ENCODE measurements at regions of chr12 and their contacts with region 1.

Region 1: GRCh38 chr12:106841510-106842302 is 67.2 kb downstream of the RIC8B start:
- DNase-seq: peak; percentile 33 to 68 (median 48)
- ATAC-seq: peak; percentile 82
- H3K4me3 ChIP-seq: no peak overlapping the region
- H3K27ac ChIP-seq: no peak overlapping the region
- H3K4me1 ChIP-seq: peaks cover 6 to 24% of the 10 kb centered on the region in 2 experiments; a peak in 3 of 5 replicates
- H3K27me3 ChIP-seq: no peaks in the 10 kb centered on the region
- CTCF ChIP-seq: peak; percentile 41 to 87 (median 68); a peak in 5 of 6 replicates
- EP300 ChIP-seq: no peak
- POLR2A ChIP-seq: no peak
- RAD21 ChIP-seq: peak; percentile 78 to 92

Region 2: GRCh38 chr12:106357549-106358395 is 483.9 kb before region 1 on chr12 and contains the start of gene POLR3B:
- CTCF ChIA-PET with region 1: interaction called, 13 read pairs
- POLR2A ChIA-PET with region 1: no interaction called
- in situ Hi-C with region 1: no loop called
- intact Hi-C with region 1: loop called (anchors 10 kb)
- DNase-seq: peak; percentile 95 to 98 (median 96)
- ATAC-seq: peak; percentile 86
- H3K4me3 ChIP-seq: peak within 1 kb of the TSS; percentile 72
- H3K27ac ChIP-seq: peak within 1 kb of the TSS; percentile 94
- H3K4me1 ChIP-seq: peaks cover 14 to 15% of the 10 kb centered on the region in 2 experiments; a peak in 4 of 5 replicates
- H3K27me3 ChIP-seq: no peaks in the 10 kb centered on the region
- CTCF ChIP-seq: peak; percentile 79 to 92 (median 90)
- EP300 ChIP-seq: peak; percentile 30; the same call in 1 of the 2 replicates
- POLR2A ChIP-seq: peak; percentile 94
- RAD21 ChIP-seq: peak; percentile 81 to 82
- polyA plus RNA-seq, gene POLR3B: 7.6 to 16.5 TPM

Region 3: DNA sequence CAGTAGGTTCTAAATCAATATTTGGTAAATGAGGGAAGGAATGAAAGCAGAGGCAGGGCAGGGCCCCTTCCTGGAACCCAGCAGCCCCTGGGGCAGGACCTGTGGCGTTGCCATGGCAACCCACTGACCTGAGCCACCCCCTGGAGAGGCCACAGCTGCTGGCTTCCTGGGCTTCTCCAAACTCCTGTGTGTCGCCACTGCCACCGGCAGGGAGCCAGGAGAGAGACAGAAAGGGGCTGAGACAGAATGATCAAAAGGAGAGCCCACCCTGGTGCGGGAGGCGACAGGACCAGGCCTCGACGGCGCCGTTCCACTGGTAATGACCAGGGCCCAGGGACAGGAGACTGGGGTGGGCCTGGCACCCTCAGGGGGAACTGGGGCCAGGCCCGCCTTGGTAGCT is 240.7 kb before region 1 on chr12:
- CTCF ChIA-PET with region 1: no interaction called
- POLR2A ChIA-PET with region 1: no interaction called
- in situ Hi-C with region 1: no loop called
- intact Hi-C with region 1: loop called (anchors 10 kb)
- DNase-seq: peak; percentile 36 to 44 (median 43)
- ATAC-seq: peak; percentile 86
- H3K4me3 ChIP-seq: no peak overlapping the region
- H3K27ac ChIP-seq: no peak overlapping the region
- H3K4me1 ChIP-seq: peaks cover 0 to 5% of the 10 kb centered on the region in 2 experiments; a peak in 1 of 5 replicates
- H3K27me3 ChIP-seq: peaks cover 0 to 26% of the 10 kb centered on the region in 2 experiments; a peak in 2 of 5 replicates
- CTCF ChIP-seq: 0 out of 6 replicates have a peak, but pooled peaks of 1 of the 3 experiments have one; percentile 3
- EP300 ChIP-seq: no peak
- POLR2A ChIP-seq: no peak
- RAD21 ChIP-seq: peak in 1 of 2 experiments; percentile 20; a peak in 1 of 4 replicates

Region 4: DNA sequence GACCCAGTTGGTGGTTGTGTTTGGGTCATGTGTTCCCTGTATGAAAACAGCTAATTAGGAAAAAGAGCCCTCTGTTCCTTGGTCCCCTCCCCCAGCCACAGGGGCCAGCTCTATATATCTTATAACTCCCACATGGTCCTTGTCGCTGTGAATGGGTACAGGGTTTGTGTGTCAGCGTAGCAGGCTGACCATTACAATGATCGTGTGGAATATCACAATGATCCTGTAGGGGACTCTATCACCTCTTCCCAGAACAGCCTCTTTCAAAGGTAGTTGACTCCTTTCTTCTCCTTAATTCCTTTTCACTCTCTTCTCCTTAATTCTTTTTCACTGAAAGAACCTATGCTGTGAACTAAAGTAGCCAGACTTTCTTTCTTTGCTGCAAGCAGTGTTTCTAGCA is 118.9 kb before region 1 on chr12:
- CTCF ChIA-PET with region 1: interaction called, 4 read pairs
- POLR2A ChIA-PET with region 1: no interaction called
- in situ Hi-C with region 1: no loop called
- intact Hi-C with region 1: loop called (anchors 2 kb)
- DNase-seq: peak in 3 of 4 experiments; percentile 15 to 37 (median 28)
- ATAC-seq: peak; percentile 77
- H3K4me3 ChIP-seq: no peak overlapping the region
- H3K27ac ChIP-seq: no peak overlapping the region
- H3K4me1 ChIP-seq: no peaks in the 10 kb centered on the region
- H3K27me3 ChIP-seq: peaks cover 6 to 13% of the 10 kb centered on the region in 2 experiments; a peak in 4 of 5 replicates
- CTCF ChIP-seq: peak; percentile 21 to 38 (median 27); a peak in 1 of 6 replicates
- EP300 ChIP-seq: no peak
- POLR2A ChIP-seq: no peak
- RAD21 ChIP-seq: no peak

Region 5: GRCh38 chr12:106774005-106774807 is 67.5 kb before region 1 on chr12 and contains the start of gene RIC8B:
- CTCF ChIA-PET with region 1: no interaction called
- POLR2A ChIA-PET with region 1: interaction called, 4 read pairs
- in situ Hi-C with region 1: no loop called
- intact Hi-C with region 1: loop called (anchors 2 kb)
- DNase-seq: peak; percentile 89 to 98 (median 92)
- ATAC-seq: peak; percentile 96
- H3K4me3 ChIP-seq: peak within 1 kb of the TSS; percentile 66
- H3K27ac ChIP-seq: peak within 1 kb of the TSS; percentile 96
- H3K4me1 ChIP-seq: peaks cover 14 to 19% of the 10 kb centered on the region in 2 experiments; a peak in 4 of 5 replicates
- H3K27me3 ChIP-seq: no peaks in the 10 kb centered on the region
- CTCF ChIP-seq: peak in 1 of 3 experiments; percentile 20; a peak in 1 of 6 replicates
- EP300 ChIP-seq: peak; percentile 73; the same call in 1 of the 2 replicates
- POLR2A ChIP-seq: peak; percentile 90
- RAD21 ChIP-seq: no peak
- polyA plus RNA-seq, gene RIC8B: 0.92 to 1.6 TPM

Region 6: DNA sequence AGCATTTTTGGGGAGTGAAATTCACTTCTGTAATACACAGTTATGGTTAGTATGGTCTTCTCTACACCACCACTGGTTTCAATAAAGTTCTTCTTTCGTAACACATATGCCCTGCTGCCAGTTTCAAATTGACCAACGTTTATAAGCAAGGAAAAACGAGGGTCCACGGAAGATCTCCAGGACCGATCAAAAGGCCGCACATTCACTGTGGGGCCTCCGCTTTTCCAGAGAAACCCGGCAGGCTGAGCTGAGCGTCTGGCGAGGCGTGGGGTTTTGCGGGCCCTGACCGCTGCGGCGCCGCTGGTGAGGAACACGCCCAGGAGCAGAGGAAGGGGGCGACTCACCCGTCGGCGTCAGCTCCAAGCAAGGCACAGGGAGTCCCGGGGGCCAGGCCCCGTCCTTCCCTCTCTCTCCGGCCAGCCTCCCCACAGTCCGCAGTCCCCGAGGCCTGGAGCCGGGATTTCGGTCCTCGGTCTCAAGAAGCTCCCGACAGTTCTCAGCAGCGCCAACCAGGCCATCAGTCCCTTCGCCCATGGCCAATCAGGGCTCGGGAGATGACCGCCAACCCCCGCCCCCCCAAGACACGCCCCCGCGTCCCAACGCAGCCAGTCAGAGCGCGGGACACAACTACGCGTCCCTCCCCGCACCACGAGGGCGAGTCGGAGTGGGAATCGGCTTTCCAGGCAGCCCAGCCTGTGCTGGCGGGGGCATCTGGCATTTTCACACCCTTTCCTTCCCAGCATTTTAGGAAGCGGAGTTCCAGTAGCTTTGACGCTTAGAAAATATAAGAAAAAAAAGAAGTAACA is 145.1 kb after region 1 on chr12 and contains the start of gene MTERF2:
- CTCF ChIA-PET with region 1: no interaction called
- POLR2A ChIA-PET with region 1: no interaction called
- in situ Hi-C with region 1: no loop called
- intact Hi-C with region 1: no loop called
- DNase-seq: peak; percentile 97 to 98 (median 98)
- ATAC-seq: peak; percentile 96
- H3K4me3 ChIP-seq: peak within 1 kb of the TSS; percentile 64
- H3K27ac ChIP-seq: peak within 1 kb of the TSS; percentile 85
- H3K4me1 ChIP-seq: peaks cover 16 to 25% of the 10 kb centered on the region in 2 experiments
- H3K27me3 ChIP-seq: no peaks in the 10 kb centered on the region
- CTCF ChIP-seq: no peak
- EP300 ChIP-seq: no peak
- POLR2A ChIP-seq: peak; percentile 85
- RAD21 ChIP-seq: 0 out of 4 replicates have a peak, but pooled peaks of 1 of the 2 experiments have one; percentile 7
- polyA plus RNA-seq, gene MTERF2: 10.0 to 11.6 TPM